CD4-positive, alpha-beta T cell (primary cell): ENCODE measurements at regions of chr5 and their contacts with region 1.

Region 1: DNA sequence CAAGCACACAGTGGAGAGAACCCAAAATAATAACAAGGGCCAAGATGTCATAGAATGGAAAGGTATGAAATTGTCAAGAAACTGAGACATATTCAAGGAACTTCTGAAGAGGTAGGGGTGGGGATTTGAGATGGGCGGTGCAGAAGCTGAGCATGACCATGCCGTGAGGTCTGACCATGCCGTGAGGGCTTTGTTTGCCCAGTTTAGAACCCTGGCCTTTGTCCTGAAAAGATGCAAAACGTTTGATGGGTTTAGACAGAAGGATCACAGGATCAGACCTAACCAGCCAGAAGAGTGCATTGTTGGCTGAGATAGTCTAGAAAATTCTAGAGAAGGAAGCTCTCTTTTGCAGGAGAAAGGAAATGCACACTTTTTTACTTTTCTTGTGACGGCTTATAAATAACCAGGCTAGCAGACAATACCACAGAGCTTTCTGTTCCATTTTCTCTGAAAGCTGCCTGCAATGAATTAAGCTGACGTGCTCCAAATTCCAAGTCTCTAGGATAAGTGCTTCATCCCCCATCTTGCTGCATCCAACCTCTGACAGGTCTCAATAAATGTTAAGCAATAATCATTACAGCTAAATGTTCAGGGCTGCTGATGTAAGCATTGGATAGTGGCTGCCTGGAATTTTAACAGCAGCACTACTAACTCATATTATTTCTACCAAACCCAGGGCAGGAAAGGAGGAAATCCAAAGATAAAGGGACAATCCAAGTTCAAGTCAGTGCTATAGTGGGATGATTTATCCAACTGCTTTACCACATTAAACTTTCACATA is 110.9 kb upstream of the IL6ST start:
- DNase-seq: no peak
- ATAC-seq: peak; percentile 13
- H3K4me3 ChIP-seq: no peak overlapping the region
- H3K4me3 Mint-ChIP-seq: peak overlapping the region; percentile 73
- H3K27ac ChIP-seq: peak overlapping the region; percentile 39 to 45
- H3K27ac Mint-ChIP-seq: peak overlapping the region; percentile 88
- H3K4me1 ChIP-seq: peaks cover 38% of the 10 kb centered on the region
- H3K4me1 Mint-ChIP-seq: peaks cover 77% of the 10 kb centered on the region
- H3K27me3 ChIP-seq: no peaks in the 10 kb centered on the region
- H3K27me3 Mint-ChIP-seq: no peaks in the 10 kb centered on the region
- CTCF ChIP-seq: no peak

Region 2: GRCh38 chr5:55657443-55657842 is 448.3 kb before region 1 on chr5:
- CTCF ChIA-PET with region 1: no interaction called
- POLR2A ChIA-PET with region 1: no interaction called
- intact Hi-C with region 1: no loop called
- DNase-seq: no peak
- ATAC-seq: no peak
- H3K4me3 ChIP-seq: no peak overlapping the region
- H3K4me3 Mint-ChIP-seq: no peak overlapping the region
- H3K27ac ChIP-seq: no peak overlapping the region
- H3K27ac Mint-ChIP-seq: no peak overlapping the region
- H3K4me1 ChIP-seq: no peaks in the 10 kb centered on the region
- H3K4me1 Mint-ChIP-seq: no peaks in the 10 kb centered on the region
- H3K27me3 ChIP-seq: no peaks in the 10 kb centered on the region
- H3K27me3 Mint-ChIP-seq: no peaks in the 10 kb centered on the region
- CTCF ChIP-seq: no peak

Region 3: DNA sequence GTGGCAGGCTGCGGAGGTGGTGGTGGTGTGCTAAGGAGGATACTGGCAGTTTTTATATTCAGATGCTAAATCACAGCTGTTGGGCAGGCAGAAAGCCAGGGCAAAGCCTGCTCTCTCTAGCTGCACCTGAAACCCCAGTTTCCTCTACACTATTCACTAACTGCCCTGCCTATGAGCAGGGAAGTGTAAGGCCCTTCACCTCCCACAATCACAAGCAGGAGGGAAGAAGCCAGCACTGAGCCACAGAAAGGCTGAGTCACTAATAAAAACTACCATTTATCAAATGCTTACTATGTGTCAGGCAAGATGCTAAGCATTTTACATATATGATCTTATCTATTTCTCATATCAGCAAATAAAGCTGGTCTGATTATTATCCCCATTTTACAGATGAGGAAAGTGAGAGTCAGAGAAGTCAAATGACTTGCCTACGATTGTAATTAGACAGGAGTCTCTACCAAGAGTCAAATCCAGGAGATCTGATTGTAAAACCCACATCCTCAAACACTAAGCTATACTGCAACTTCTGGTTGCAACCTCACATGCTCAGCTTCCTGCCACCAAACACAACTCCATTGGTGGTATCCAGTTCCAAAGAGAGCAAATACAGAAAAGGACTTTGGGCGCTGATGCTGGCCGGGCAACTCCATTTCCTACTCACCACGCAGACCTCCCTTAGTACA is 93.3 kb before region 1 on chr5:
- CTCF ChIA-PET with region 1: no interaction called
- POLR2A ChIA-PET with region 1: interaction called, 15 read pairs
- intact Hi-C with region 1: no loop called
- DNase-seq: peak in 8 of 14 experiments; percentile 13 to 82 (median 49)
- ATAC-seq: peak; percentile 94
- H3K4me3 ChIP-seq: no peak overlapping the region
- H3K4me3 Mint-ChIP-seq: peak overlapping the region; percentile 16
- H3K27ac ChIP-seq: peak overlapping the region; percentile 29 to 53
- H3K27ac Mint-ChIP-seq: peak overlapping the region; percentile 75
- H3K4me1 ChIP-seq: peaks cover 33% of the 10 kb centered on the region
- H3K4me1 Mint-ChIP-seq: peaks cover 43% of the 10 kb centered on the region
- H3K27me3 ChIP-seq: no peaks in the 10 kb centered on the region
- H3K27me3 Mint-ChIP-seq: no peaks in the 10 kb centered on the region
- CTCF ChIP-seq: no peak

Region 4: GRCh38 chr5:56056875-56057274 is 48.8 kb before region 1 on chr5:
- CTCF ChIA-PET with region 1: interaction called, 5 read pairs
- POLR2A ChIA-PET with region 1: interaction called, 13 read pairs
- intact Hi-C with region 1: loop called in 1 of 2 experiments (anchors 5 kb)
- DNase-seq: no peak
- ATAC-seq: no peak
- H3K4me3 ChIP-seq: no peak overlapping the region
- H3K4me3 Mint-ChIP-seq: peak overlapping the region; percentile 63
- H3K27ac ChIP-seq: peak overlapping the region; percentile 18 to 35
- H3K27ac Mint-ChIP-seq: peak overlapping the region; percentile 86
- H3K4me1 ChIP-seq: peaks cover 83% of the 10 kb centered on the region
- H3K4me1 Mint-ChIP-seq: peaks cover 74% of the 10 kb centered on the region
- H3K27me3 ChIP-seq: no peaks in the 10 kb centered on the region
- H3K27me3 Mint-ChIP-seq: no peaks in the 10 kb centered on the region
- CTCF ChIP-seq: no peak

Region 5: GRCh38 chr5:56095579-56096102 is 10.1 kb before region 1 on chr5:
- CTCF ChIA-PET with region 1: interaction called, 4 read pairs
- POLR2A ChIA-PET with region 1: interaction called, 54 read pairs
- intact Hi-C with region 1: no loop called
- DNase-seq: no peak
- ATAC-seq: no peak
- H3K4me3 ChIP-seq: no peak overlapping the region
- H3K4me3 Mint-ChIP-seq: peak overlapping the region; percentile 30
- H3K27ac ChIP-seq: peak overlapping the region; percentile 7 to 63
- H3K27ac Mint-ChIP-seq: peak overlapping the region; percentile 88
- H3K4me1 ChIP-seq: peaks cover 71% of the 10 kb centered on the region
- H3K4me1 Mint-ChIP-seq: peaks cover 88% of the 10 kb centered on the region
- H3K27me3 ChIP-seq: no peaks in the 10 kb centered on the region
- H3K27me3 Mint-ChIP-seq: no peaks in the 10 kb centered on the region
- CTCF ChIP-seq: no peak

Region 6: DNA sequence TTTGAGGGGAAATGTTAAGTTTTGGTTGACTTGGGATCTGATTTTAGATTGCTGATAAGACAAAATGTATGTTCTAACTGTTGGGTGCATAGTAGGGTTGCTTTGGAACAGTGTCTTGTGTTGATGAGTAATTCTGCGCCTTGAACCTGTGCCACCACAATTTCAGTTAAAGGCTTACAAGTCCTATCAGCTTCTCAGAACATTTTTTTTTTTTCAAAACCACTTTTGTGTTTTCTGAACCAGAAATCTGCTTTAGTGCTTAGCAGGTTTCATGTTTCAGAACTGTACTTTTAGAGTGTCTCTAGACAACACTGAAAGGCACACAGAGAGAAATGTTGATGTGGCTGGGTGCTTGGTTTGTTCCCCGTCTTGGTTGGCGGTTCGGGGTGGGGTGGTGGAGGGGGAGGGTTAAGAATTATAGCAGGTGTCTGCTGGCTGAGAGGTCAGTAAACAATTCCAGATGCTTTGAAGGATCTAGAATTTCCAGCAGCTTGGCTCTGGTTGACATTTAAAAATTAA is 42.8 kb after region 1 on chr5:
- CTCF ChIA-PET with region 1: interaction called, 3 read pairs
- POLR2A ChIA-PET with region 1: interaction called, 10 read pairs
- intact Hi-C with region 1: loop called (anchors 2 to 5 kb)
- DNase-seq: peak in 13 of 14 experiments; percentile 28 to 75 (median 51)
- ATAC-seq: peak; percentile 80
- H3K4me3 ChIP-seq: no peak overlapping the region
- H3K4me3 Mint-ChIP-seq: peak overlapping the region; percentile 62
- H3K27ac ChIP-seq: peak overlapping the region; percentile 42 to 46
- H3K27ac Mint-ChIP-seq: peak overlapping the region; percentile 97
- H3K4me1 ChIP-seq: peaks cover 48% of the 10 kb centered on the region
- H3K4me1 Mint-ChIP-seq: peaks cover 74% of the 10 kb centered on the region
- H3K27me3 ChIP-seq: no peaks in the 10 kb centered on the region
- H3K27me3 Mint-ChIP-seq: no peaks in the 10 kb centered on the region
- CTCF ChIP-seq: no peak

Region 7: GRCh38 chr5:56200856-56201666 is 95.4 kb after region 1 on chr5:
- CTCF ChIA-PET with region 1: interaction called, 3 read pairs
- POLR2A ChIA-PET with region 1: interaction called, 4 read pairs
- intact Hi-C with region 1: loop called in 1 of 2 experiments (anchors 5 kb)
- DNase-seq: peak; percentile 39 to 86 (median 50)
- ATAC-seq: peak; percentile 95
- H3K4me3 ChIP-seq: no peak overlapping the region
- H3K4me3 Mint-ChIP-seq: no peak overlapping the region
- H3K27ac ChIP-seq: no peak overlapping the region
- H3K27ac Mint-ChIP-seq: peak overlapping the region; percentile 2
- H3K4me1 ChIP-seq: peaks cover 6% of the 10 kb centered on the region
- H3K4me1 Mint-ChIP-seq: peaks cover 34% of the 10 kb centered on the region
- H3K27me3 ChIP-seq: no peaks in the 10 kb centered on the region
- H3K27me3 Mint-ChIP-seq: no peaks in the 10 kb centered on the region
- CTCF ChIP-seq: peak; percentile 85